CD8-positive, alpha-beta T cell (primary cell): ENCODE measurements at regions of chr3 and their contacts with region 1.

Region 1: DNA sequence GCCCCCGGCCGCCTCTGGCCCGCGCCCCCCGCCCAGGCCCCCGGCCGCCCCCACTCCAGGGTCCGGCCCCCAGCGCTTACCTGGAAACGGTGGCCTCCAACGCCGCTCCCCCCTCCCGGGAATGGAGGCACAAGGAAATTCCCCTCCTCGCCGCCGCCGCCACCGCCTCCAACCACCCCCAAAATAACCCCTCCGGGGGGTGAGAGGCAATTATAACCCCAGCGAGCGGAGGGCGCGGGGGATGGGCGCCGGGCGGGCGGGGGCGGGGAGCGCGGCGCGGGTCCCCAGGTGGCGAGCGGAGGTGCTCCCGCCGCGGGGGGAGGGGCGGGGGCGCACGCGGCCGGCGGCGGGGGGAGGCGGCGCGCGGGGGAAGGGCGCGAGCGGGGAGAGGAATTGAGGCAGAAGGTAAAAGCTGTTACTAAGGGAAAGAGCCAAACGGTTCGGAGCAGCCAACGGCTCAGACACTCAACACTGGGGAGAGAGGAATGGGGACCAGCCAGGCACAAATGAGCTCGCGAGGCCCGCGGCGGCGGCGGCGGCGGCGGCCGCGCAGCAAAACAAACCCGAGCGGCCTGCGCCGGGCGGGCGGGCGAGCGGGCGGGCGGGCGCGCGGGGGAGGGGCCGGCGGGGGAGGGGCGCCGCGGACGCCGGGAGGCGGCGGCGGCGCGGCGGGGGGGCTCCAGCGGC is at the start of gene TBL1XR1:
- DNase-seq: peak; percentile 78 to 95 (median 86)
- ATAC-seq: peak; percentile 48
- H3K4me3 ChIP-seq: peak within 1 kb of the TSS; percentile 86 to 93
- H3K4me3 Mint-ChIP-seq: peak within 1 kb of the TSS; percentile 99
- H3K27ac ChIP-seq: peak within 1 kb of the TSS; percentile 81 to 85
- H3K27ac Mint-ChIP-seq: peak within 1 kb of the TSS; percentile 99
- H3K4me1 ChIP-seq: peaks cover 56% of the 10 kb centered on the region
- H3K4me1 Mint-ChIP-seq: peaks cover 65% of the 10 kb centered on the region
- H3K27me3 ChIP-seq: no peaks in the 10 kb centered on the region
- H3K27me3 Mint-ChIP-seq: no peaks in the 10 kb centered on the region
- CTCF ChIP-seq: no peak
- total RNA-seq, gene TBL1XR1: 64.8 to 68.4 TPM

Region 2: GRCh38 chr3:177057768-177058167 is 139.4 kb before region 1 on chr3:
- CTCF ChIA-PET with region 1: no interaction called
- POLR2A ChIA-PET with region 1: interaction called, 3 read pairs
- intact Hi-C with region 1: loop called in 1 of 2 experiments (anchors 2 kb)
- DNase-seq: peak in 6 of 9 experiments; percentile 21 to 57 (median 36)
- ATAC-seq: peak; percentile 93
- H3K4me3 ChIP-seq: peak overlapping the region in 1 of 2 experiments; percentile 6
- H3K4me3 Mint-ChIP-seq: no peak overlapping the region
- H3K27ac ChIP-seq: peak overlapping the region in 1 of 2 experiments; percentile 2
- H3K27ac Mint-ChIP-seq: no peak overlapping the region
- H3K4me1 ChIP-seq: peaks cover 15% of the 10 kb centered on the region
- H3K4me1 Mint-ChIP-seq: peaks cover 45% of the 10 kb centered on the region
- H3K27me3 ChIP-seq: no peaks in the 10 kb centered on the region
- H3K27me3 Mint-ChIP-seq: no peaks in the 10 kb centered on the region
- CTCF ChIP-seq: no peak

Region 3: GRCh38 chr3:177144923-177145780 is 52.0 kb before region 1 on chr3:
- CTCF ChIA-PET with region 1: interaction called, 3 read pairs
- POLR2A ChIA-PET with region 1: interaction called, 5 read pairs
- intact Hi-C with region 1: loop called (anchors 2 to 5 kb)
- DNase-seq: peak in 2 of 9 experiments; percentile 66 to 85
- ATAC-seq: peak; percentile 79
- H3K4me3 ChIP-seq: peak overlapping the region in 1 of 2 experiments; percentile 43
- H3K4me3 Mint-ChIP-seq: peak overlapping the region; percentile 29
- H3K27ac ChIP-seq: peak overlapping the region; percentile 8 to 63
- H3K27ac Mint-ChIP-seq: peak overlapping the region; percentile 84
- H3K4me1 ChIP-seq: peaks cover 60% of the 10 kb centered on the region
- H3K4me1 Mint-ChIP-seq: peaks cover 75% of the 10 kb centered on the region
- H3K27me3 ChIP-seq: no peaks in the 10 kb centered on the region
- H3K27me3 Mint-ChIP-seq: no peaks in the 10 kb centered on the region
- CTCF ChIP-seq: no peak

Region 4: GRCh38 chr3:177244606-177245005 is 47.4 kb after region 1 on chr3:
- CTCF ChIA-PET with region 1: no interaction called
- POLR2A ChIA-PET with region 1: no interaction called
- intact Hi-C with region 1: loop called in 1 of 2 experiments (anchors 5 kb)
- DNase-seq: no peak
- ATAC-seq: no peak
- H3K4me3 ChIP-seq: no peak overlapping the region
- H3K4me3 Mint-ChIP-seq: no peak overlapping the region
- H3K27ac ChIP-seq: no peak overlapping the region
- H3K27ac Mint-ChIP-seq: no peak overlapping the region
- H3K4me1 ChIP-seq: no peaks in the 10 kb centered on the region
- H3K4me1 Mint-ChIP-seq: peaks cover 4% of the 10 kb centered on the region
- H3K27me3 ChIP-seq: no peaks in the 10 kb centered on the region
- H3K27me3 Mint-ChIP-seq: no peaks in the 10 kb centered on the region
- CTCF ChIP-seq: no peak

Region 5: GRCh38 chr3:177597311-177598096 is 400.3 kb after region 1 on chr3:
- CTCF ChIA-PET with region 1: no interaction called
- POLR2A ChIA-PET with region 1: interaction called, 6 read pairs
- intact Hi-C with region 1: loop called (anchors 5 kb)
- DNase-seq: peak in 7 of 9 experiments; percentile 13 to 77 (median 26)
- ATAC-seq: peak; percentile 87
- H3K4me3 ChIP-seq: peak overlapping the region; percentile 0 to 8
- H3K4me3 Mint-ChIP-seq: peak overlapping the region; percentile 76
- H3K27ac ChIP-seq: peak overlapping the region; percentile 44 to 82
- H3K27ac Mint-ChIP-seq: peak overlapping the region; percentile 95
- H3K4me1 ChIP-seq: peaks cover 52% of the 10 kb centered on the region
- H3K4me1 Mint-ChIP-seq: peaks cover 84% of the 10 kb centered on the region
- H3K27me3 ChIP-seq: no peaks in the 10 kb centered on the region
- H3K27me3 Mint-ChIP-seq: no peaks in the 10 kb centered on the region
- CTCF ChIP-seq: no peak